Psoas muscle (tissue), 8 donors: ENCODE measurements at regions of chr17 and their contacts with region 1.

Region 1: GRCh38 chr17:42101513-42102319 is 3.4 kb upstream of the ZNF385C start:
- DNase-seq: peak; percentile 88 to 95
- ATAC-seq: peak; percentile 94 to 97 (median 96)
- H3K4me3 ChIP-seq: no peak overlapping the region
- H3K27ac ChIP-seq: no peak overlapping the region
- H3K4me1 ChIP-seq: peaks cover 10% of the 10 kb centered on the region
- H3K27me3 ChIP-seq: peaks cover 0 to 6% (median 0%) of the 10 kb centered on the region in 3 donors
- CTCF ChIP-seq: peak; percentile 94

Region 2: DNA sequence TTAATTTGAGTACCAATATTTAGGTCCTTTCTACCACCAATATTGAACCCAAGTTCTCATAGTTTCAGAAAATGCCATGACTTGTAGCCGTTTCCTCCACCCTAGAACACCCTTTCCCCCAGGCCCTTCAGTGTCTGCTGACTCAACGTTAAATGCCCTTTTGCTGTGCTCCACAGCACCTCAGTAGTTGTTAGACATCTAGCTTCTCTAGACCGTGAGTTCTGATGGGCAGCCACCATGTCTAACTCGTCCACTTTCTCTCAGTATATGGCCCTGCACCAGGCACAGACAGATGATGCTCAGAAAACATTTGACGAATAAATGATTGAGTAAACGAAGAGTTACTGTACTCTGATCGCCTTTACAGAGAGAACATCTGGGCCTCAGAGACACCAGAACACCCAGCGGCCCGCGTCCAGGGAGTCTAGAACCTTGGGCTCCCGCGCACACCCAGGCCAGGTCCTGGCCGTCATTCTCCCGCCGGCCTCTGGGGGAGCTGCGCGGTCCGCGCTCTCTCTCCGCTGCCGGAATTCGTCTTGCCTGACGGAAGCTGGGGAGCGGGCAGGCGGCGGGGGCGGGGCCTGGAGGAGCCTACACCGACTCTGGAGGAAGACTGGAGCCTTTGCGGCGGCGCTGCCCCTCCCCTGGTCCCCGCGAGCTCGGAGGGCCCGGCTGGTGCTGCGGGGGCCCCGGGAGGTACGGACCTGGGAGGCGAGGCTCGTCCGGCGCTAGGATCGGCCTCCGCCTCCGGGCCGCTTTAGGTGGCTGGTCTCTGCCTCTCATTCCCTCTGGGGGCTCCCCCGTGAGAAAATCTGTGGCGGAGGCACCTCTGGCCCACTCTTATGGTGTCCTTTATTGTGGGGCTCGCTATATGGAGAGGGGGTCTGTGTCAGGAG is 82.0 kb before region 1 on chr17 and contains the start of gene NKIRAS2:
- intact Hi-C with region 1: loop called in 1 of 2 experiments (anchors 2 kb)
- DNase-seq: peak; percentile 94 to 97
- ATAC-seq: peak; percentile 77 to 83 (median 81)
- H3K4me3 ChIP-seq: peak within 1 kb of the TSS; percentile 94
- H3K27ac ChIP-seq: peak within 1 kb of the TSS; percentile 94
- H3K4me1 ChIP-seq: peaks cover 37% of the 10 kb centered on the region
- H3K27me3 ChIP-seq: no peaks in the 10 kb centered on the region
- CTCF ChIP-seq: peak; percentile 93
- total RNA-seq, gene NKIRAS2: 35.0 to 46.8 (median 39.4) TPM

Region 3: GRCh38 chr17:42027961-42028790 is 73.5 kb before region 1 on chr17:
- intact Hi-C with region 1: loop called (anchors 2 to 5 kb)
- DNase-seq: no peak
- ATAC-seq: no peak
- H3K4me3 ChIP-seq: no peak overlapping the region
- H3K27ac ChIP-seq: no peak overlapping the region
- H3K4me1 ChIP-seq: peaks cover 14% of the 10 kb centered on the region
- H3K27me3 ChIP-seq: no peaks in the 10 kb centered on the region
- CTCF ChIP-seq: peak; percentile 9

Region 4: DNA sequence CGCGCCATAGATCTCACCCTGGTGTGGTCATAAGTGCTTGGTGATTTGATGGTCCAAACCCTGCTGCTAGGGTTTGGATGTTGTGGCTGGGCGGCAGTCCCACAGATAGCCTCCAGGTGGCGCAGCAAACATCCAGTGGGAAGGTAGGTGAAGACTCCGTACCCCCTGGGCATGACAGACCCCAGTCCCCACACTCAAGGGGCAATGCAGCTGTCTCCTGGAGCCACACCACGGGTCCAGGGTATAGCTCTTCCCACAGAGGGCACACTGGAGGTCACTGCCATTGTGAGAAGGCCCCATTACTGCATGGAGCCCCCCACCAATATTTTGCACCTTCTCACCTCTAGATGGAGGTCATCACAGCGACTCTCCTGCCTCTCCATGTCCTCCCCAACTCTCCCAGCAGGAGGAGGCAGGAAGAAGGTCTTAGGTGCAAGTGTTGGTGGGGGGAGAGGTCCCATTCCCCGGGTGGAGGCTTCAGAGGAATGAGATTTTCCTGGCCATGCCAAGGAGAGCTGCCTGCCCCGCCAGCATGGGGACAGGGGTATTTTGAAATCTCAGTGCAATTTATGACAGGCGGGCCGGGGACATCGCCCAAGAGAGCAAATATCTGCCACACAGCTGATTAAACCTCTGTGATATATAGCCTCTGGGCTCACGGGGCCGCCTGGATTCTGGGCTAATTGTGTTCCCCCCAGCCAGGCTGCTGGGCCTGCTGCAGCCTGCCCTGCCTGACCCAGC is 34.2 kb before region 1 on chr17:
- intact Hi-C with region 1: loop called (anchors 1 kb)
- DNase-seq: peak; percentile 65 to 90
- ATAC-seq: peak; percentile 61 to 87 (median 86)
- H3K4me3 ChIP-seq: no peak overlapping the region
- H3K27ac ChIP-seq: peak overlapping the region; percentile 80
- H3K4me1 ChIP-seq: peaks cover 21% of the 10 kb centered on the region
- H3K27me3 ChIP-seq: no peaks in the 10 kb centered on the region
- CTCF ChIP-seq: peak; percentile 96

Region 5: DNA sequence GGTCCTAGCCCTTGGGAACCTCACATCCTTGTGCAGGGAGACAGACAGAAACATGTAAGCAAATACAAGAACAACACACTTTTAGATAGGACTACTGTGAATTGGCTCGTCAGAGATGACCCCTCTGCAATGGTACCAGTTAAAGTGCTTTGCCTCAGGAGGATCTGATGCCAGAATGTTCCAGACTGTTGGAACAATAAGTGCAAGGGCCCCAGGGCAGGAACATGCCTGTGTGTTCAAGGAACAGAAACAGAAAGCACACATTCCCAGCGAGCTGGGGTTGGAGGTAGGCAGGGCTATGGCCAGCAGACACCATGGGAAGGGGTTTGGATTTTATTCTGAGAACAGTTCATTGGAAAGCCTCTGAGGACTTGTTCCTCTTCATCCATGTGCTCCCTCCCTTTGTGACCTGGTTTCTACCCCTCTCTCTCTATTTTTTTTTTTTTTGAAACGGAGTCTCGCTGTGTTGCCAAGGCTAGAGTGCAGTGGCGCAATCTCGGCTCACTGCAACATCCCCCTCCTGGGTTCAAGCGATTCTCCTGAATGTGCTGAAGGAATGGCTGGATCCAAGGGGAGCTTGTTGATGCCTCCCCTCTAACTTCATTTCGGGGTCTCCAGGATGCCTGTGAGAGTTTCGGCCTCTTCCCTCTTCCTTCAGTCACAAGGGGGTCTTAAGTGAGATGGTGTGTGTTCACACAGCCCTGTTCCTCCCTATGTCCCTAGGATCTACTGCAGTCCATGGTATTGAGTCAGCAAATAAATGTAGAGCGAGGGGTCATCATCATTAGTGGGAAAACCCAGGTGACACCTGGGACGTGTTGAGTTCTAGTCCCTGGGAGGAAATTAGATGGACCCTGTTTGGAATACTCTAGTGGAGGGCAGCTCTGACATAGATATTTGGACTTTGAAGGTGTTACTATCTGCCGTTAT is 193.0 kb after region 1 on chr17:
- intact Hi-C with region 1: no loop called
- DNase-seq: peak in 1 of 2 donors; percentile 19
- ATAC-seq: no peak
- H3K4me3 ChIP-seq: no peak overlapping the region
- H3K27ac ChIP-seq: no peak overlapping the region
- H3K4me1 ChIP-seq: no peaks in the 10 kb centered on the region
- H3K27me3 ChIP-seq: no peaks in the 10 kb centered on the region
- CTCF ChIP-seq: no peak